Ascending aorta (tissue), 2 donors: ENCODE measurements at regions of chr22 and their contacts with region 1.

Region 1: GRCh38 chr22:50209893-50210292 is 9.1 kb downstream of the SELENOO start:
- DNase-seq: peak in 1 of 2 donors; percentile 76
- H3K4me3 ChIP-seq: no peak overlapping the region
- H3K27ac ChIP-seq: no peak overlapping the region
- H3K4me1 ChIP-seq: no peaks in the 10 kb centered on the region
- H3K27me3 ChIP-seq: no peaks in the 10 kb centered on the region
- CTCF ChIP-seq: peak; percentile 64 to 81 (median 75)

Region 2: DNA sequence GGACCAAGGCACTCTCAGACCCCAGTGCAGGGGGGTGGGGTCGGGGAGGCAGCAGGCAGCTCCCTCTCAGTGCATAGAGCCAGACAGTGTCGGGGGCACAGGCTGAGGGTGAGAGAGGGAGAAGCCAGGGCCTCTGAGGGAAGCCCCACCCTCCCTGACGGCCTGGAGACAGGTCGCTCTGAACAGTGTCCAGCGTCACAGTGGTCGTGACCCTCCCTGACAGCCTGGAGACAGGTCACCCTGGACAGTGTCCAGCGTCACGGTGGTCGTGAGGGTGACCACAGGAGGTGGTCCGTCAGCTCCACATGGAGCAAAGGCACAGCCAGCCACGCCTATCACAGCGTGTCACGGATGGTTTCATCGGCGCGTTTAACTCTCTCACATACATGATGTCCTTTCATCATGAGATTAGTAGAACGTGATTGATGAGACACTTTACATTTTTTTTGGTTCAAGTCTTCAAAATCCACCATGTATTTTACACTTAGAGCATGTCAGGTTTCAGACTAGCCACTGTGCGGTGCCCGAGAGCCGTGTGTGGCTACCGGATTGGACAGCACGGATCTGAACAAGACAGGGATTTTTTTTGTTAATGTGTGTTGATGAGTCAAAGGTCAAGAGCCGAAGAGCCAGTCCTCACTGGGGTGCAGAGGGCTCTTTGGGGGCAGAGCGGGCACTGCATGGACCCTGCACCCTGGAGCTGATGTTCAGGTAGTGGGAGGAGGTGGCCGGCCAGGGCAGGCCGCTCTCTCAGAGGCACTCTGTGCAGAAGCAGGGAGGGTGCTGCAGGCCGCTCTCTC is 63.3 kb before region 1 on chr22:
- intact Hi-C with region 1: loop called (anchors 2 kb)
- DNase-seq: peak in 1 of 2 donors; percentile 62
- H3K4me3 ChIP-seq: no peak overlapping the region
- H3K27ac ChIP-seq: no peak overlapping the region
- H3K4me1 ChIP-seq: no peaks in the 10 kb centered on the region
- H3K27me3 ChIP-seq: peaks cover 4% of the 10 kb centered on the region
- CTCF ChIP-seq: peak; percentile 34 to 53 (median 43)